CD4-positive, alpha-beta T cell (primary cell): ENCODE measurements at regions of chr13 and their contacts with region 1.

Region 1: GRCh38 chr13:51803422-51804294 is at the start of gene DHRS12:
- DNase-seq: peak; percentile 75 to 97 (median 82)
- ATAC-seq: peak; percentile 73
- H3K4me3 ChIP-seq: peak within 1 kb of the TSS; percentile 81
- H3K4me3 Mint-ChIP-seq: peak within 1 kb of the TSS; percentile 97
- H3K27ac ChIP-seq: peak within 1 kb of the TSS; percentile 99
- H3K27ac Mint-ChIP-seq: peak within 1 kb of the TSS; percentile 99
- H3K4me1 ChIP-seq: peaks cover 58% of the 10 kb centered on the region
- H3K4me1 Mint-ChIP-seq: peaks cover 61% of the 10 kb centered on the region
- H3K27me3 ChIP-seq: no peaks in the 10 kb centered on the region
- H3K27me3 Mint-ChIP-seq: no peaks in the 10 kb centered on the region
- CTCF ChIP-seq: no peak
- total RNA-seq, gene DHRS12: 10.0 to 14.8 TPM

Region 2: GRCh38 chr13:51764184-51765141 is 39.2 kb before region 1 on chr13:
- CTCF ChIA-PET with region 1: no interaction called
- POLR2A ChIA-PET with region 1: interaction called, 4 read pairs
- intact Hi-C with region 1: loop called in 1 of 2 experiments (anchors 2 kb)
- DNase-seq: peak; percentile 19 to 86 (median 34)
- ATAC-seq: peak; percentile 85
- H3K4me3 ChIP-seq: peak overlapping the region; percentile 49
- H3K4me3 Mint-ChIP-seq: peak overlapping the region; percentile 68
- H3K27ac ChIP-seq: peak overlapping the region; percentile 67 to 73
- H3K27ac Mint-ChIP-seq: peak overlapping the region; percentile 85
- H3K4me1 ChIP-seq: peaks cover 18% of the 10 kb centered on the region
- H3K4me1 Mint-ChIP-seq: peaks cover 23% of the 10 kb centered on the region
- H3K27me3 ChIP-seq: no peaks in the 10 kb centered on the region
- H3K27me3 Mint-ChIP-seq: no peaks in the 10 kb centered on the region
- CTCF ChIP-seq: no peak

Region 3: GRCh38 chr13:51825165-51825592 is 21.5 kb after region 1 on chr13:
- CTCF ChIA-PET with region 1: no interaction called
- POLR2A ChIA-PET with region 1: interaction called, 42 read pairs
- intact Hi-C with region 1: loop called (anchors 1 to 2 kb)
- DNase-seq: peak in 4 of 14 experiments; percentile 39 to 85 (median 76)
- ATAC-seq: peak; percentile 58
- H3K4me3 ChIP-seq: peak overlapping the region; percentile 54
- H3K4me3 Mint-ChIP-seq: peak overlapping the region; percentile 86
- H3K27ac ChIP-seq: peak overlapping the region; percentile 76 to 79
- H3K27ac Mint-ChIP-seq: peak overlapping the region; percentile 89
- H3K4me1 ChIP-seq: peaks cover 78% of the 10 kb centered on the region
- H3K4me1 Mint-ChIP-seq: peaks cover 88% of the 10 kb centered on the region
- H3K27me3 ChIP-seq: no peaks in the 10 kb centered on the region
- H3K27me3 Mint-ChIP-seq: no peaks in the 10 kb centered on the region
- CTCF ChIP-seq: no peak

Region 4: GRCh38 chr13:51844862-51845573 is 41.4 kb after region 1 on chr13 and contains the start of gene TMEM272:
- CTCF ChIA-PET with region 1: interaction called, 3 read pairs
- POLR2A ChIA-PET with region 1: no interaction called
- intact Hi-C with region 1: loop called in 1 of 2 experiments (anchors 5 kb)
- DNase-seq: peak in 12 of 14 experiments; percentile 25 to 71 (median 44)
- ATAC-seq: peak; percentile 84
- H3K4me3 ChIP-seq: no peak within 1 kb of the TSS
- H3K4me3 Mint-ChIP-seq: no peak within 1 kb of the TSS
- H3K27ac ChIP-seq: no peak within 1 kb of the TSS
- H3K27ac Mint-ChIP-seq: no peak within 1 kb of the TSS
- H3K4me1 ChIP-seq: peaks cover 7% of the 10 kb centered on the region
- H3K4me1 Mint-ChIP-seq: peaks cover 7% of the 10 kb centered on the region
- H3K27me3 ChIP-seq: no peaks in the 10 kb centered on the region
- H3K27me3 Mint-ChIP-seq: peaks cover 6% of the 10 kb centered on the region
- CTCF ChIP-seq: peak; percentile 89
- total RNA-seq, gene TMEM272: 2.7 to 2.8 TPM